ENCODE measurements at regions of chr14 and their contacts with region 1.

Region 1: DNA sequence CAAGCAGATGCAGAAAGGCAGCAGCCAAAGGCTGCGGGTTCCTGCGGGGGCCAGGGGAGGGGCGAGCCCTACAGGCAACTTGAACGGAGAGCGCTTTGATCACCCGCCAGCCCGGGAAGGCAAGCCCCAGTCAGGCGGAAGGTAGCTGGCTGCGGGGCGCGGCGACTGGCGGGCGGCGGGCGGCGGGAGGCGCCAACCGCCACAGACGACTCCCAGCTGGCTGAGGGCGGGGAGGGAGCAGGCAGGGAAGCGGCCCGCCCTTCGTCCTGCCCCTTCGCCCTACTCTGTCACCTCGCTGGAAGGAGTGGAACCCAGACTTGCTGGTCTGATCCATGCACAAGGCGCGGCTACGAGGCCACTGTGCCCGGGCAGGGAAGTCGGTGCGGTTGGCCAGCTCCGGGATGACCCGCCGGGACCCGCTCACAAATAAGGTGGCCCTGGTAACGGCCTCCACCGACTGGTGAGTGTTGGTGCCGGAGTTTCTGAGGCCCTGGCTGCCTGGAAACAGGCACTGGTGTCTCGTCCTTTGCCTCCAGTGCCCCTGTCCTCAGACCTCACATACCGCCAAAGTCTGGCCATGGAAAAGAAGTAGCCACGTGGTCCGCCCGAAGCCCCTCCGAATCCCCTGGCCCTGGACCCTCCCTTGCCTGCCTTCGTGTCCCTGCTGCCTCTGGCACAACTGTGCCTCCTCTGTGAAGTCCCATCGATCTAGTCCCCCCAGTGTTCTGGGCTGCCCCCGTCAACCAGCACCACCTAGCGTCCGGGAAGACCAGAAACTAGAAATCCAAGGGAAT is 15.4 kb upstream of the CARMIL3 start:
- DNase-seq: peak; percentile 77
- H3K4me3 ChIP-seq: peak overlapping the region; percentile 12 to 42 (median 33)
- H3K27ac ChIP-seq: peak overlapping the region; percentile 15
- H3K4me1 ChIP-seq: no peaks in the 10 kb centered on the region
- H3K27me3 ChIP-seq: no peaks in the 10 kb centered on the region
- CTCF ChIP-seq: peak; percentile 67 to 75
- POLR2A ChIP-seq: peak; percentile 54

Region 2: GRCh38 chr14:23984891-23985602 is 51.3 kb before region 1 on chr14:
- CTCF ChIA-PET with region 1: interaction called, 4 read pairs
- POLR2A ChIA-PET with region 1: no interaction called
- dilution Hi-C with region 1: no loop called
- intact Hi-C with region 1: loop called (anchors 1 kb)
- DNase-seq: no peak
- H3K4me3 ChIP-seq: no peak overlapping the region
- H3K27ac ChIP-seq: no peak overlapping the region
- H3K4me1 ChIP-seq: peaks cover 4% of the 10 kb centered on the region
- H3K27me3 ChIP-seq: no peaks in the 10 kb centered on the region
- CTCF ChIP-seq: no peak
- POLR2A ChIP-seq: no peak

Region 3: GRCh38 chr14:24013654-24014514 is 22.5 kb before region 1 on chr14:
- CTCF ChIA-PET with region 1: no interaction called
- POLR2A ChIA-PET with region 1: no interaction called
- dilution Hi-C with region 1: no loop called
- intact Hi-C with region 1: loop called (anchors 1 kb)
- DNase-seq: peak; percentile 82
- H3K4me3 ChIP-seq: no peak overlapping the region
- H3K27ac ChIP-seq: no peak overlapping the region
- H3K4me1 ChIP-seq: peaks cover 3% of the 10 kb centered on the region
- H3K27me3 ChIP-seq: peaks cover 0 to 2% of the 10 kb centered on the region in 2 experiments
- CTCF ChIP-seq: peak; percentile 64 to 72
- POLR2A ChIP-seq: no peak

Measured in endothelial cell of umbilical vein (primary cell).